Cardiac septum (tissue), 1 donor: ENCODE measurements at regions of chr2 and their contacts with region 1.

Region 1: DNA sequence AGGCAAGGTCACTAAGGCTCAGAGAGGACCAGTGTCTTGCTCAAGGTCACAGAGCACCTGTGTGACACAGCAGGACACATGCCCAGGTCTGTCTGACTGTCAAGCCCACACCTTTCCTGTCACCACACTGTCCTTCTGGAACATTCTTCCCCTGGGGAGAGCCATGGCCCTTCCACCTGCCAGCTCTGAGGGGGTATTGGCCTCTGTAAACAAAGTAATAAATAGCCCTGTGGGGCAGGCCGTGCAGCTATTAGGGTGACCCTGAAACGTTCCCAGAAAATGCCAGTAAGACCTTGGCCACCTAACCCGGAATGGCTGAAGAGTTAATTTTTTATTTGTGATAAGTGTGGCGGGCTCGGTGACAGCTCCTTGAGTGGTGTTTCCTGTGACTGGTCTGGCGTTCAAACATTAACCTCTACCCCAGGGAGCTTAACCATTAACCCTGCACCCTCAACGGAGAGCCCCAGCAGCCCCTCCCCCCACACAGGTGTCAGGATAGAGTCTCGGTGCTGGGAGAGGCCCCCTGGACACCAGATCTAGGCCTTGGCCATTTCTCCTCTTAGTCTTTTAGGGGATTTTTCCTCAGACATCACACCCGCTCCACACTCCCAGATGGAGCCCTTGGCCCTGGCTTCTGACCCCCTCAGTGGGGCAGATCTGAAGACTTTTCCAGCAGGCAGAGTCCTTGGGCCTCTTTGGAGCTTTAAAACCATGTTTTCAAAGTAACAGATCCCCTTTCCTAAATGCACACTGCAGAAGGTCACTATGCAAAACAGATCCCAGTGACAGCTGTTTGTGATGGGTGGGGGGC is 36.6 kb downstream of the SCTR start:
- DNase-seq: no peak

Region 2: DNA sequence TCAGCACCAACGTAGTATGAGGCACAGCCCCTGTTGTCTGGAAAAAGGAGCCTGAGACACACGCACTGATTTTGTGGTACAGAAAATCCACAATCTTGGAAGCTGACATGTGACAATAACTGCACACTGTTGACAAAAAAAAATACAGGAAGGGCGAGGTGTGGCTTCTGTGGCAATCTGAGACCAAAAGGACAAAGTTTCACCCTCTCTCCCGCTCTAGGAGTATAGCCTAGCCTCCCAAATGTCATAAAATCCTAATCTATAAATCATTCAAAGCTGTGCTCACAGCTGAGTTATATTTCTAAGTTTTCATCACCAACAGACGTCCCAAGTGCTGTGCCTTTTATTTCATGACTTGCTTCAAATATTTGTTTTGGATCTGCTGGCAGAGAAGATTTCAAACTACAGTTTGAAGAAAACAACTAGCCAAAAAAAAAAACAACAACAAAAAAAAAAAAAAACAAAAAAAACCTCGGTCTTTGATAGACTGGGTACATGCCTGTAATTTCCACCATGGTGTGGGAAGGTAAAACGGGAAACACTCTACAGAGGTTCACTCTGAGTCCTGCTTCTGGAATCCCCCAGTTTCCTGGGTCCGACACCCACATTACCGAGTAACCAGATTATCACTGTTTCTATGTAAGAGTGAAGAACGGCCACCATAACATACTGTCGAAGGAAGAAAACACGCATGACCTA is 182.0 kb before region 1 on chr2:
- intact Hi-C with region 1: loop called (anchors 5 kb)
- DNase-seq: no peak

Region 3: DNA sequence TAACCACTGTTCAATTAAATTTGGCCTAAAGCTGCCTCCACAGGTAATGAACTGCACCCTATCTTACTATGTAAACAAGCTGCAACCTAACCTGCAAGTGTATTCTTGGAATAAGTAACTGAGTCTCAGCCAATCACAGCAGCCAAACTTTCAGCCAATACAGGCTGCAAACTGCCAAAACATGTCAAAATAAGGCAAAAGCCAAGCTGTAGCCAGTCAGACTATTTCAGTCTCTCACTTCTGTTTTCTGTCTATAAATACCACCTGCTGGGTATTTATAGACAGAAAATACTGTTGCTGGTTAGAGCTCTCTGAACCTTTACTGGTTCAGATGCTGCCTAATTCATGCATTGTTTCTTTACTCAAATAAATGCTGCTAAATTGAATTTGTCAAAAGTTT is 135.3 kb before region 1 on chr2:
- intact Hi-C with region 1: loop called (anchors 5 kb)
- DNase-seq: no peak